Activated CD8-positive, alpha-beta T cell treated with anti-CD3 and anti-CD28 coated beads, Interleukin-2, amount 10 ng/mL, durations not matched to agents 7 days and 5 days (primary cell): ENCODE measurements at regions of chrX and their contacts with region 1.

Region 1: GRCh38 chrX:109536439-109537336 is at the start of gene NXT2:
- DNase-seq: peak; percentile 89
- ATAC-seq: peak; percentile 99
- H3K4me3 Mint-ChIP-seq: peak within 1 kb of the TSS; percentile 96
- H3K27ac Mint-ChIP-seq: peak within 1 kb of the TSS; percentile 98
- H3K4me1 Mint-ChIP-seq: peaks cover 25% of the 10 kb centered on the region
- H3K27me3 Mint-ChIP-seq: peaks cover 5% of the 10 kb centered on the region
- total RNA-seq, gene NXT2: 12.6 to 13.1 TPM

Region 2: DNA sequence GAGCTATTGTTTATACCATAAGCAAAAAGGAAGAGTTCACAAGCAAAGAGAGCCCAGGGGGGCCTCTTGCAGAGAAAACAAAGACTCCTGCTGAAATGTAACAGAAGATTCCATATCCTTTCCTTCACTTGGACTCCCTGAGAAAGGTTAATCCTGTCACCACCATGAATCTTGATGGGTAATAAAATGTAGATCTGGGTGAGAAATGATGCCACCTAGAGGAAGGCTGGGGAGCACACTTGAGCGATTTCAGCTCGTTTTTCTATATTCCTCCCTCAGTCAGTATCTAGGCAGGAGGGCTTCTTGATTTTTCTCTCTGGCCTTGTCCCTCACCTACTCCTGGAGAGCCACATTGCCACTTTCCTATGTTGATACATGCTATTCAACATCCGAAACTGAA is 98.5 kb after region 1 on chrX:
- CTCF ChIA-PET with region 1: interaction called, 15 read pairs
- POLR2A ChIA-PET with region 1: no interaction called
- DNase-seq: no peak
- ATAC-seq: no peak
- H3K4me3 Mint-ChIP-seq: no peak overlapping the region
- H3K27ac Mint-ChIP-seq: no peak overlapping the region
- H3K4me1 Mint-ChIP-seq: peaks cover 22% of the 10 kb centered on the region
- H3K27me3 Mint-ChIP-seq: no peaks in the 10 kb centered on the region